Heart left ventricle (tissue), 16 donors: ENCODE measurements at regions of chr3 and their contacts with region 1.

Region 1: GRCh38 chr3:106215047-106215446 is 346.2 kb upstream of the CBLB start:
- DNase-seq: no peak
- ATAC-seq: no peak
- H3K4me3 ChIP-seq: no peak overlapping the region
- H3K27ac ChIP-seq: no peak overlapping the region
- H3K4me1 ChIP-seq: peaks cover 0 to 8% (median 0%) of the 10 kb centered on the region in 12 donors
- H3K27me3 ChIP-seq: no peaks in the 10 kb centered on the region
- CTCF ChIP-seq: no peak
- POLR2A ChIP-seq: no peak

Region 2: GRCh38 chr3:105700575-105700974 is 514.5 kb before region 1 on chr3:
- intact Hi-C with region 1: loop called in 1 of 10 experiments (anchors 10 kb)
- DNase-seq: no peak
- ATAC-seq: no peak
- H3K4me3 ChIP-seq: no peak overlapping the region
- H3K27ac ChIP-seq: no peak overlapping the region
- H3K4me1 ChIP-seq: peaks cover 0 to 7% (median 0%) of the 10 kb centered on the region in 12 donors
- H3K27me3 ChIP-seq: no peaks in the 10 kb centered on the region
- CTCF ChIP-seq: no peak
- POLR2A ChIP-seq: no peak